Heart right ventricle (tissue), 16 donors: ENCODE measurements at regions of chr9 and their contacts with region 1.

Region 1: DNA sequence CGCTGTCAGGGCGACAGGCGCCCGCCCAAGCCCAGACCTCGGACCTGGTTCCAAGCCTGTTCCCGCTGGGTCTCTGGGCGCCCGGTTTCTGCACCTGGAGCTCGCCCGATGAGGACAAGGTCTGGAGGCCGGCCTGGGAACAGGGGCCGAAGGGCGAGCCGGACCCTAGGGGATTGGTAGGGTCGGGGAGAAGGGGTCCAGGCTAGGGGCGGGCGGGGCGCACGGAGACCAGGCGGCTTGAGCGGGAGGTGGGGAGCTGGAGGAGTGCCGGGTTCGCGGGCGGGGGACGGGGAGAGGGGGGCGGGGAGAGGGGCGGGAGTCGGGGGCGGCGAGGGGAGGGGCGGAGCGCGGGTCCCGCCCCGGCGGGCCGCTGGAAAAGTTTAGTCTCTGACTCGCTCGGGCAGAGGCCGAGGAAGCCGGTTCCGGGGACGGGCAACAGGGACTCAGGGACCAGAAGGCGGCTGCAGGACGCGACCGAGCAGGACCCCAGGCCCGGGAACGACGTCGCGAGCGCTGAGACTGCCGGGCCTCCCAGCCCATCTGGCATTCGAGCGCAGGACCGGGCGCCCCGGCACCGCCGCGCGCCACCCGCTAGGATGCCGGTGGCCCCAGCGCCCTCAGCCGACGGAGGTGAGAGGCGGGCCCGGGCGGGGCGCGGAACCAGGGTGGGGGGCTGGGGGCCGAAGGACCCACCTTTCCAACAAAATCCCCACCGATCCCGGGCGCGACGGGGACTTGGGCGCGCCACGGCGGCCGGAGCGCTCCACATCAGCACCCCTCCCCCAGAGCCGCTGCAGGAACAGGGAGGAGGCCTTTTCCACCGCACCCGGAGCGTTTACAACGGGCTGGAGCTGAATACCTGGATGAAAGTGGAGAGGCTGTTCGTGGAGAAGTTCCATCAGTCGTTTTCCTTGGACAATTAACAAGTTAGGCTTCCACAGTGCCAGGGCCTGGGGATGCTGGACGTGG is at the start of gene S1PR3:
- DNase-seq: peak; percentile 71 to 79
- ATAC-seq: peak; percentile 79 to 91 (median 85)
- H3K4me3 ChIP-seq: peak within 1 kb of the TSS; percentile 64 to 92 (median 76)
- H3K27ac ChIP-seq: peak within 1 kb of the TSS in 9 of 10 donors; percentile 54 to 90 (median 83)
- H3K4me1 ChIP-seq: peaks cover under 1 to 63% (median 30%) of the 10 kb centered on the region in 9 donors
- H3K27me3 ChIP-seq: peaks cover 0 to 37% (median 4%) of the 10 kb centered on the region in 7 donors
- CTCF ChIP-seq: peak in 5 of 9 donors; percentile 12 to 40 (median 36)
- total RNA-seq, gene S1PR3: 3.6 to 61.6 (median 13.1) TPM

Region 2: DNA sequence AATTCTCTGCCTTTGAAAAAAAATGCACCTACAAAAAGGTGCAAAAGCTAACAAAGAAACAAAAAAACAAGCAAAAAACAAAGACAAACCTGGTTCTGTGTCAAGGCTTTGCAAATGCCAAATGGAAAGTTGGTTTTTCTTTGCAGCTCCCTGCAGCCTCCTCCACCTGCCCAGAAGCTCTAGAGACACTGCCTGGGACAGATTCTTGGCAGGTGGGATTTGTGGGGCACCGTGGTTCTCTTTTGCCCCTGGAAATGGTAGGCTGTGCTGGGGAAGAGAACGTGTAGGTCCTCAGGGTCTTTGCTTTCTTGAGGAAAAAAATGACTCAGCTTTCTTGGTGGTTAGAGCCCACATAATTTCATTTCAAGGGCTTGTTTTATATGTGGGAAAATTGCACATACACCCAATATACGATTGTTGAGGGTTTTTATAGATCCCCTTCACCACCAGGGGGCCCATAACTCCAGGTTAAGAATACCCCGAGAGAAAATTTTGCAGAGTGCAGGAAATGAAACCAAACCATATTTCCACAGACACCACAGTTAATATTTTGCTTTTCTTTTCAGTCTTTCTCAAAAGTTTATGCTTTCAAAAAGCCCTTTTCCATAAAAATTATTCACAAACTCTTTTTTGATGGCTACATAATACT is 397.7 kb before region 1 on chr9:
- intact Hi-C with region 1: loop called in 1 of 10 experiments (anchors 2 kb)
- DNase-seq: peak in 1 of 2 donors; percentile 79
- ATAC-seq: peak in 7 of 8 donors; percentile 66 to 82 (median 75)
- H3K4me3 ChIP-seq: no peak overlapping the region
- H3K27ac ChIP-seq: no peak overlapping the region
- H3K4me1 ChIP-seq: no peaks in the 10 kb centered on the region
- H3K27me3 ChIP-seq: peaks cover 0 to 16% (median 0%) of the 10 kb centered on the region in 7 donors
- CTCF ChIP-seq: peak; percentile 45 to 84 (median 70)

Region 3: DNA sequence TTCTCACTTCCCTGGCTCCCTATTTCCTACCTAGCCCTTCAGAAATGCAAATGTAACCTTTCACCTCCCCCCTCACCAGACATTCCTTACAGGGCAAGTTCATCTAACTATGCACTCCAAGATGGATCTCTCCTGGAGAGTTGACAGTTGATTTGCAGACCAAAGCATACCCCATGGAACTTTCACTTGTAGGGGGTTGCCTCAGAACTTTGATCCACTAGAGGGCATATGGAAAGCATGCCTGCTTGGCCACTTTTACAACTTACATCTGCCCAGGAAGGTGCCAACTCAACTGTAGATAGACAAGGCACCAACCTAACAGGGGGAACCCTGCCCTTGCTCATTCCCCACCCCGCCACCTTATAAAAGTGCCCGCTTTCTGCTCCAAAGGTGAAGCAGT is 268.6 kb before region 1 on chr9:
- intact Hi-C with region 1: loop called in 3 of 10 experiments (anchors 10 kb)
- DNase-seq: no peak
- ATAC-seq: peak in 6 of 8 donors; percentile 37 to 75 (median 63)
- H3K4me3 ChIP-seq: no peak overlapping the region
- H3K27ac ChIP-seq: no peak overlapping the region
- H3K4me1 ChIP-seq: peaks cover 0 to 10% (median 6%) of the 10 kb centered on the region in 9 donors
- H3K27me3 ChIP-seq: peaks cover 0 to 7% (median 0%) of the 10 kb centered on the region in 7 donors
- CTCF ChIP-seq: peak in 8 of 9 donors; percentile 14 to 54 (median 46)

Region 4: DNA sequence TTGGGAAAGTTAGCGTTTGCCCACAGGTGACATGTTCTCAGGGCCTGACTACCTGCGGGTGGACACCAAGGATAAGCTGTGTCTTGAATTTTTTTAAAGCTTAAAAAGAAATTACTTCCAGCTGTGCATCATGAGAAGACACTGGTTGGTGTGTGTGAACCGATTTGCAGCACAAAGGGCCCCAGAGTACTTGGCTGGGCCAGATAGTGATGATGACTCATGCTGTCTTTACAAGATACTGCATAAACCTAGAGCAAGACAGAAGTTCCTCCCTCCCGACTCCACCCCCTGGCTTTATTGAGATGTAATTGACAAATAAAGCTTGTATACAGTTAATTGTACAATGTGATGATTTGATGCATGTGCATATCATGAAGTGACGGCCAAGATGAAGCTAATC is 243.6 kb before region 1 on chr9:
- intact Hi-C with region 1: loop called in 1 of 10 experiments (anchors 10 kb)
- DNase-seq: no peak
- ATAC-seq: peak; percentile 49 to 78 (median 75)
- H3K4me3 ChIP-seq: no peak overlapping the region
- H3K27ac ChIP-seq: peak overlapping the region in 9 of 10 donors; percentile 10 to 81 (median 52)
- H3K4me1 ChIP-seq: peaks cover 0 to 53% (median 26%) of the 10 kb centered on the region in 9 donors
- H3K27me3 ChIP-seq: peaks cover 0 to 4% (median 0%) of the 10 kb centered on the region in 7 donors
- CTCF ChIP-seq: peak in 1 of 9 donors; percentile 6

Region 5: DNA sequence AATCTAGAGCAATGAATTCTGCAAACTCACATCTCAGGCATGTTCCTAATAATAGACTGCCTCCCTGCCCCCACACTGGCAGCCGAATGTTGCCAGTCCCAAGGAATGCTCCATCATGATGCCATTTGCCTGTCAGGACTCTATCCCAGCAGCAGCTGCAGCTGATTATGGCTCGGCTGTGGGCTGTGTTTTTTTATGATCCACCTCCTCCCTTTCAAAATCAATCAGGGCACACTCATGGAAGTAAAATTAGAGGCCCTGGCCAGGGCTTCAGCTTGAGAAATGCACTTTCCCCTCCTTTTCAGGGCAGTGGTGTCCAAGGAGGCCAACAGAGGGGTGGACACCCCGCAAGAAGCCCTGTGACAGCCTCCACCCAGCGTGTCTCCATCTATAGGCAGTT is 176.8 kb before region 1 on chr9:
- intact Hi-C with region 1: loop called in 2 of 10 experiments (anchors 10 kb)
- DNase-seq: peak; percentile 63 to 77
- ATAC-seq: peak; percentile 88 to 97 (median 93)
- H3K4me3 ChIP-seq: no peak overlapping the region
- H3K27ac ChIP-seq: peak overlapping the region; percentile 55 to 81 (median 74)
- H3K4me1 ChIP-seq: peaks cover 3 to 43% (median 20%) of the 10 kb centered on the region in 9 donors
- H3K27me3 ChIP-seq: peaks cover 0 to 52% (median 0%) of the 10 kb centered on the region in 7 donors
- CTCF ChIP-seq: no peak

Region 6: GRCh38 chr9:88874383-88874782 is 117.0 kb before region 1 on chr9:
- intact Hi-C with region 1: loop called in 4 of 10 experiments (anchors 5 to 10 kb)
- DNase-seq: no peak
- ATAC-seq: peak in 7 of 8 donors; percentile 20 to 61 (median 46)
- H3K4me3 ChIP-seq: no peak overlapping the region
- H3K27ac ChIP-seq: peak overlapping the region in 5 of 10 donors; percentile 40 to 73 (median 57)
- H3K4me1 ChIP-seq: peaks cover 5 to 35% (median 18%) of the 10 kb centered on the region in 9 donors
- H3K27me3 ChIP-seq: no peaks in the 10 kb centered on the region
- CTCF ChIP-seq: peak in 7 of 9 donors; percentile 18 to 48 (median 40)

Region 7: DNA sequence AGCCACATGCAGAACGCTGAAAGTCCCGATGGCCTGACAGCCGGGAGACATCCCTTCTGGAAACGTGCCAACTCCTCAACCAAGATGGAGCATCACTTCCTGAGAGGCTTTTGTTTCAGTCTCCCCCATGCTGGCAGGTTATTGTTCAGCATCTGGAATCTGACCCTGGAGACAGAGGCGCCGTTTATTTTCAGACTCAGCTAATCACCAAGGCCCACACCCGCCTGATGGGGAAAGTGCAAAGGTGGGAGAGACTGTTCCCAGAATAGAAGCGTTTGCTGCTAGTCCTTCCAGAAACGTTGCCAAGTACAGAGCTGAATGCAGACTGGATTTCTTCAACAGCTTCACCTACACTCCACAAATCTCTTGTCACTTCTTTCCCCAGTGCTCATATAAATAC is 41.9 kb before region 1 on chr9:
- intact Hi-C with region 1: loop called in 3 of 10 experiments (anchors 2 to 5 kb)
- DNase-seq: peak; percentile 44 to 73
- ATAC-seq: peak; percentile 80 to 96 (median 90)
- H3K4me3 ChIP-seq: no peak overlapping the region
- H3K27ac ChIP-seq: peak overlapping the region in 9 of 10 donors; percentile 42 to 80 (median 61)
- H3K4me1 ChIP-seq: peaks cover 5 to 52% (median 32%) of the 10 kb centered on the region in 9 donors
- H3K27me3 ChIP-seq: no peaks in the 10 kb centered on the region
- CTCF ChIP-seq: no peak

Region 8: GRCh38 chr9:88965473-88965872 is 25.9 kb before region 1 on chr9:
- intact Hi-C with region 1: no loop called
- DNase-seq: peak in 1 of 2 donors; percentile 37
- ATAC-seq: peak; percentile 46 to 95 (median 72)
- H3K4me3 ChIP-seq: no peak overlapping the region
- H3K27ac ChIP-seq: no peak overlapping the region
- H3K4me1 ChIP-seq: peaks cover 0 to 3% (median 0%) of the 10 kb centered on the region in 9 donors
- H3K27me3 ChIP-seq: peaks cover 0 to 6% (median 0%) of the 10 kb centered on the region in 7 donors
- CTCF ChIP-seq: no peak